ENCODE measurements at regions of chr19 and their contacts with region 1.

Region 1: GRCh38 chr19:40777937-40778705 is at the start of gene RAB4B:
- DNase-seq: peak; percentile 100
- ATAC-seq: peak; percentile 81
- H3K4me3 Mint-ChIP-seq: peak within 1 kb of the TSS; percentile 98
- H3K27ac Mint-ChIP-seq: peak within 1 kb of the TSS; percentile 98
- H3K4me1 Mint-ChIP-seq: peaks cover 34% of the 10 kb centered on the region
- H3K27me3 Mint-ChIP-seq: no peaks in the 10 kb centered on the region
- total RNA-seq, gene RAB4B: 53.1 to 57.7 TPM

Region 2: DNA sequence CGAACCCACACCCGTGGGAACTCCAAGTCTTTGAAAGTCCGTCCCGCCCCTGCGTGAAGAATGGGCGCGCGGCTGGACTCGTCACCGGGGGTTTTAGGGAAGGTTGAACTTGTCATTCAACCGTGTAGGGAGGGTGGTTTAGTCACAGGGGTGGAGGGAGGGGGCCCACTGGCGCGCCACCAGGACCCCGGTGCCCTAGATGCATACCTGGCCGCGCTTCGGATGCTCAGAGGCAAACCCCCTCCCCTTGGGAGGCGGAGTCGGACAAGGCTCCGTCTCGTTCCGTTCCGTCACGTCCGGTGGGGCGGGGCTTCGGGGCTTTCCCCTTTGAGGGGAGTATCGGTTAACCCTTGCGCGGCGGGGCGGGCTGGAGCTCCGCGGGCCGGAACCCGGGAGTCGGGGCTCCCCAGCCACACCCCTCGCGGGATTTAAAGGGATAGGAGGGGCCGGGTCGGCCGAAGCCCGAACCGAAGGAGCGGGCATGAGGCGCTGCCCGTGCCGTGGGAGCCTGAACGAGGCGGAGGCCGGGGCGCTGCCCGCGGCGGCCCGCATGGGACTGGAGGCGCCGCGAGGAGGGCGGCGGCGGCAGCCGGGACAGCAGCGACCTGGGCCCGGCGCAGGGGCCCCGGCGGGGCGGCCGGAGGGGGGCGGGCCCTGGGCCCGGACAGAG is 61.3 kb before region 1 on chr19 and contains the starts of genes COQ8B and ITPKC:
- POLR2A ChIA-PET with region 1: interaction called, 24 read pairs
- DNase-seq: peak; percentile 100
- ATAC-seq: peak; percentile 65
- H3K4me3 Mint-ChIP-seq: peak within 1 kb of the TSS; percentile 90
- H3K27ac Mint-ChIP-seq: peak within 1 kb of the TSS; percentile 92
- H3K4me1 Mint-ChIP-seq: peaks cover 49% of the 10 kb centered on the region
- H3K27me3 Mint-ChIP-seq: no peaks in the 10 kb centered on the region
- total RNA-seq, gene COQ8B: 35.8 to 36.8 TPM
- total RNA-seq, gene ITPKC: 7.1 TPM

Region 3: DNA sequence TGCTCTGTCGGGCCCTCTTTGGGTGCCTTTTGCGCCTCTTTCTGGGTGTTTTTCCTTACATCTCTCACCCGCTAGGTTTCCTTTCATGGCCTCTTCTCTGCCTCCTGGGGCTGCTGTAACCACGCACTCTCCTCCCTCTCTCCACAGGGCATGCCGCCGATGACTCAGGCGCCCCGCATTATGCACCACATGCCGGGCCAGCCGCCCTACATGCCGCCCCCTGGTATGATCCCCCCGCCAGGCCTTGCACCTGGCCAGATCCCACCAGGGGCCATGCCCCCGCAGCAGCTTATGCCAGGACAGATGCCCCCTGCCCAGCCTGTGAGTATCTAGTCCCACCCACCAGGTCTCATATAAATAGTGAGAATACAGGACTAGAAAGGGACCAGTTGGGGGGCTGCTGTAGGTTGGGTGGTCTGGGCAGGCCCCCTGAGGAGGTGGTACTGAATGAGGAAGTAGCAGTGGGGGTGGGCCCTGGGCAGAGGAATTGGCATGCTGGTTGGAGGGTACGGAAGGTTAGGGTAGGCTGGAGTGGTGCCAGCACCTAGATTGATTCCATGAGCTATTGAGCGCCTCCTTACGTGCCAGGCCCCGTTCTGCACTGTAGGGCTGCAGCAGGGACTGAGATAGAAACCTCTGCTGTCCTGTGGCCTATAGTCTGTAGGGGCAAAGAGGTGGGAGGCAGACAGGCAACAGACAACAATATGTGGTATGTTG is 15.2 kb before region 1 on chr19:
- POLR2A ChIA-PET with region 1: interaction called, 14 read pairs
- DNase-seq: no peak
- ATAC-seq: peak; percentile 52
- H3K4me3 Mint-ChIP-seq: peak overlapping the region; percentile 62
- H3K27ac Mint-ChIP-seq: peak overlapping the region; percentile 89
- H3K4me1 Mint-ChIP-seq: peaks cover 55% of the 10 kb centered on the region
- H3K27me3 Mint-ChIP-seq: no peaks in the 10 kb centered on the region

Region 4: GRCh38 chr19:40798223-40798996 is 20.3 kb after region 1 on chr19:
- POLR2A ChIA-PET with region 1: interaction called, 79 read pairs
- DNase-seq: peak; percentile 72
- ATAC-seq: peak; percentile 78
- H3K4me3 Mint-ChIP-seq: peak overlapping the region; percentile 93
- H3K27ac Mint-ChIP-seq: peak overlapping the region; percentile 97
- H3K4me1 Mint-ChIP-seq: peaks cover 38% of the 10 kb centered on the region
- H3K27me3 Mint-ChIP-seq: no peaks in the 10 kb centered on the region